Motor neuron (in vitro differentiated cells): ENCODE measurements at regions of chr7 and their contacts with region 1.

Region 1: GRCh38 chr7:97027427-97028234 is 3.0 kb upstream of the DLX5 start:
- ATAC-seq: peak; percentile 54 to 86 (median 85)
- H3K4me3 ChIP-seq: peak overlapping the region in 2 of 5 donors; percentile 18 to 25
- H3K27ac ChIP-seq: no peak overlapping the region
- H3K4me1 ChIP-seq: peaks cover 3 to 6% of the 10 kb centered on the region in 2 donors

Region 2: DNA sequence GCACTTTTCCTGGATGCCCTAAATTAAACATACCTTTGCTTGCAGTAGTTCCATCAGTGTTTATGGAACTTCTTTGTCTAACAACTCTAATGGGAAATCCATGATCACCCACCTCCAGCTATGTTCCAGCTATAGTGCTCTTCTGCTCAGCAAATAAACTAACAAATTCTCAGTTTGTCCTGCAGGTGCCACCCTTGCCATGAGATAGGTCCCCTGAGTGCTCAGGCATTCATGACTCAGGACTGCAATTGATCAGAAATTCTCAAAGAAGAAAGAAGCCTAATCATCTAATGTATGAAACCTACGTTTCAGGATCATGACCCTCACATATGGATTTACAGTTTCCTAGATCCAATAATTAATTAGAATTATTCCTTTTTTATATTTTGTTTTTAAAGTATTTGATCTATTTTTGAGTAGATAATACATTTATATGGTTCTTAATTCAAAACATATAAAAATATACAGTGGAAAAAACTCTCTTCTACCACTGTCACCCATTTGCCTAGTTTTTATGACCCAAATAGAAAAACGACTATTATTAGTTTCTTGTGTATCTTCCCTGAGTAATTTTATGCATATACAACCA is 1303.9 kb before region 1 on chr7:
- in situ Hi-C with region 1: loop called in 3 of 9 experiments (anchors 25 kb)
- ATAC-seq: peak; percentile 59 to 95 (median 86)
- H3K4me3 ChIP-seq: no peak overlapping the region
- H3K27ac ChIP-seq: no peak overlapping the region
- H3K4me1 ChIP-seq: no peaks in the 10 kb centered on the region

Region 3: GRCh38 chr7:95916573-95917297 is 1110.9 kb before region 1 on chr7:
- in situ Hi-C with region 1: loop called in 5 of 9 experiments (anchors 10 to 25 kb)
- ATAC-seq: peak; percentile 42 to 83 (median 73)
- H3K4me3 ChIP-seq: no peak overlapping the region
- H3K27ac ChIP-seq: no peak overlapping the region
- H3K4me1 ChIP-seq: no peaks in the 10 kb centered on the region

Region 4: GRCh38 chr7:96061844-96062243 is 965.8 kb before region 1 on chr7:
- in situ Hi-C with region 1: loop called in 1 of 9 experiments (anchors 25 kb)
- ATAC-seq: peak in 3 of 8 experiments; percentile 19 to 89 (median 79)
- H3K4me3 ChIP-seq: no peak overlapping the region
- H3K27ac ChIP-seq: no peak overlapping the region
- H3K4me1 ChIP-seq: no peaks in the 10 kb centered on the region

Region 5: GRCh38 chr7:96075510-96076349 is 951.9 kb before region 1 on chr7:
- in situ Hi-C with region 1: loop called in 3 of 9 experiments (anchors 10 to 25 kb)
- ATAC-seq: peak; percentile 90 to 97 (median 94)
- H3K4me3 ChIP-seq: peak overlapping the region; percentile 34 to 52 (median 42)
- H3K27ac ChIP-seq: no peak overlapping the region
- H3K4me1 ChIP-seq: no peaks in the 10 kb centered on the region

Region 6: DNA sequence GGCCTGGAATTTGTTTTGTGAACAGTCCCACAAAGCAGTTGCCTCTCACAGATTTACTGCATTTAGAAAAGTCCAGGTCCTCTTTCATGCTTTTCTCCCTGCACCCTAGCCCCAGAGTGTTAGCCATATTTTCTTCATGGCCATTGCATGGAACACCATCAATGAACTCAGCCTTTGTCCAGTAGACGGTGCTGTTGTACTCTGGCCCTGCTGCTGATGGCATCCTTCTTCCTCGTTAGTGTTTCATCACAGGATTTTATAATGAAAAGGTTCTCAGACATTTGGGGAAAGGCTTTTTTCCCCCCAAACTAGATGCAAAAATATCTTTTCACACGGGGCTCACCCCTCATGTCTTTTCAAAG is 612.7 kb before region 1 on chr7:
- in situ Hi-C with region 1: loop called in 2 of 9 experiments (anchors 25 kb)
- ATAC-seq: peak in 5 of 8 experiments; percentile 38 to 87 (median 69)
- H3K4me3 ChIP-seq: no peak overlapping the region
- H3K27ac ChIP-seq: no peak overlapping the region
- H3K4me1 ChIP-seq: peaks cover 0 to 2% of the 10 kb centered on the region in 2 donors

Region 7: GRCh38 chr7:97342512-97342911 is 314.9 kb after region 1 on chr7:
- in situ Hi-C with region 1: no loop called
- ATAC-seq: no peak
- H3K4me3 ChIP-seq: no peak overlapping the region
- H3K27ac ChIP-seq: no peak overlapping the region
- H3K4me1 ChIP-seq: no peaks in the 10 kb centered on the region